ENCODE measurements at regions of chr11 and their contacts with region 1.

Region 1: GRCh38 chr11:62905927-62906531 is 15.1 kb downstream of the CHRM1 start:
- DNase-seq: peak; percentile 85
- H3K4me3 ChIP-seq: peak overlapping the region in 1 of 2 experiments; percentile 42; a peak in 2 of 4 replicates
- H3K27ac ChIP-seq: no peak overlapping the region
- H3K4me1 ChIP-seq: peaks cover 0 to 24% of the 10 kb centered on the region in 2 experiments; a peak in 1 of 4 replicates
- H3K27me3 ChIP-seq: no peaks in the 10 kb centered on the region
- CTCF ChIP-seq: peak; percentile 98
- EP300 ChIP-seq: no peak
- RAD21 ChIP-seq: peak; percentile 99

Region 2: DNA sequence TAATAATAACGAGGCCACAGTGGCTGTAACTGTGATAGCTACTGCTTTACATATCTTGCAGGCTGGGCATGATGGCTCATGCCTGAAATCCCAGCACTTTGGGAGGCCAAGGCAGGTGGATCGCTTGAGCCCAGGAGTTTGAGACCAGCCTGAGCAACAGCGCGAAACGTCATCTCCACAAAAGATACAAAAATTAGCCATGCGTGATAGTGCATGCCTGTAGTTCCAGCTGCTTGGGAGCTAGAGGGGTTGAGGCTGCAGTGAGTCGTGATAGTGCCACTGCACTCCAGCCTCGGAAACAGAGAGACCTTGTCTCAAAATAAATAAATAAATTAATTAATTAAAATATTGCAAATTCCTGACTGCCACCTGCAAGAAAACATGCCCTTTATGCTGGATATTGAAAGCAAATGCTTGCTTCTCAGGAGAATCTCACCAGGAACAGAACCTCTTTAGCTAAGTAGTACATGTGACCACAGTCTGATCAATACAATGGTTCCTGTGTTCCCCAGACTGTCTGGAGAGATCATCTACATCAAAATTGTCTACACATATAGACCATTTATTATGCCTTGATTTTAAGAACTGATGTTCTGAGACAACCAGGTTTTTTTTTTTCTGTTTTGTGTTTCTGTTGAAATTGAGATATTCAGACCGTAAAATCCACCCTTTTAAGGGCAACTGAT is 158.4 kb before region 1 on chr11:
- CTCF ChIA-PET with region 1: no interaction called
- POLR2A ChIA-PET with region 1: no interaction called
- DNase-seq: no peak
- H3K4me3 ChIP-seq: no peak overlapping the region
- H3K27ac ChIP-seq: peak overlapping the region in 1 of 2 experiments; percentile 20; a peak in 1 of 4 replicates
- H3K4me1 ChIP-seq: peaks cover 0 to 3% of the 10 kb centered on the region in 2 experiments; a peak in 1 of 4 replicates
- H3K27me3 ChIP-seq: no peaks in the 10 kb centered on the region
- CTCF ChIP-seq: no peak
- EP300 ChIP-seq: no peak
- RAD21 ChIP-seq: no peak

Region 3: GRCh38 chr11:62855571-62856332 is 50.3 kb before region 1 on chr11:
- CTCF ChIA-PET with region 1: no interaction called
- POLR2A ChIA-PET with region 1: no interaction called
- DNase-seq: peak; percentile 93
- H3K4me3 ChIP-seq: peak overlapping the region; percentile 90 to 94
- H3K27ac ChIP-seq: peak overlapping the region; percentile 61 to 93
- H3K4me1 ChIP-seq: peaks cover 14 to 16% of the 10 kb centered on the region in 2 experiments; a peak in 3 of 4 replicates
- H3K27me3 ChIP-seq: no peaks in the 10 kb centered on the region
- CTCF ChIP-seq: no peak
- EP300 ChIP-seq: no peak
- RAD21 ChIP-seq: no peak

Region 4: GRCh38 chr11:62889484-62890437 is 16.3 kb before region 1 on chr11:
- CTCF ChIA-PET with region 1: interaction called, 76 read pairs
- POLR2A ChIA-PET with region 1: no interaction called
- DNase-seq: no peak
- H3K4me3 ChIP-seq: no peak overlapping the region
- H3K27ac ChIP-seq: peak overlapping the region in 1 of 2 experiments; percentile 4; a peak in 1 of 4 replicates
- H3K4me1 ChIP-seq: peaks cover 0 to 10% of the 10 kb centered on the region in 2 experiments; a peak in 2 of 4 replicates
- H3K27me3 ChIP-seq: no peaks in the 10 kb centered on the region
- CTCF ChIP-seq: no peak
- EP300 ChIP-seq: no peak
- RAD21 ChIP-seq: no peak

Region 5: GRCh38 chr11:62974848-62975522 is 69.0 kb after region 1 on chr11:
- CTCF ChIA-PET with region 1: interaction called, 62 read pairs
- POLR2A ChIA-PET with region 1: interaction called, 4 read pairs
- DNase-seq: peak; percentile 80
- H3K4me3 ChIP-seq: no peak overlapping the region
- H3K27ac ChIP-seq: no peak overlapping the region
- H3K4me1 ChIP-seq: peaks cover 0 to 10% of the 10 kb centered on the region in 2 experiments; a peak in 1 of 4 replicates
- H3K27me3 ChIP-seq: no peaks in the 10 kb centered on the region
- CTCF ChIP-seq: peak; percentile 31; the same call in 1 of the 2 replicates
- EP300 ChIP-seq: no peak
- RAD21 ChIP-seq: peak; percentile 58

Region 6: GRCh38 chr11:62999649-63000048 is 93.6 kb after region 1 on chr11:
- CTCF ChIA-PET with region 1: interaction called, 27 read pairs
- POLR2A ChIA-PET with region 1: no interaction called
- DNase-seq: no peak
- H3K4me3 ChIP-seq: no peak overlapping the region
- H3K27ac ChIP-seq: no peak overlapping the region
- H3K4me1 ChIP-seq: no peaks in the 10 kb centered on the region
- H3K27me3 ChIP-seq: no peaks in the 10 kb centered on the region; the same call in 1 of the 2 replicates
- CTCF ChIP-seq: no peak
- EP300 ChIP-seq: no peak
- RAD21 ChIP-seq: no peak

Region 7: GRCh38 chr11:63015521-63016215 is 109.6 kb after region 1 on chr11 and contains the start of gene SLC22A8:
- CTCF ChIA-PET with region 1: interaction called, 751 read pairs
- POLR2A ChIA-PET with region 1: interaction called, 3 read pairs
- DNase-seq: no peak
- H3K4me3 ChIP-seq: no peak within 1 kb of the TSS
- H3K27ac ChIP-seq: no peak within 1 kb of the TSS
- H3K4me1 ChIP-seq: peaks cover 6 to 15% of the 10 kb centered on the region in 2 experiments; a peak in 2 of 4 replicates
- H3K27me3 ChIP-seq: no peaks in the 10 kb centered on the region; the same call in none of the 2 replicates
- CTCF ChIP-seq: no peak
- EP300 ChIP-seq: no peak
- RAD21 ChIP-seq: no peak
- polyA plus RNA-seq, gene SLC22A8: not detected in 2 replicates

Region 8: GRCh38 chr11:63032457-63032856 is 126.4 kb after region 1 on chr11:
- CTCF ChIA-PET with region 1: interaction called, 251 read pairs
- POLR2A ChIA-PET with region 1: no interaction called
- DNase-seq: no peak
- H3K4me3 ChIP-seq: no peak overlapping the region
- H3K27ac ChIP-seq: no peak overlapping the region
- H3K4me1 ChIP-seq: no peaks in the 10 kb centered on the region
- H3K27me3 ChIP-seq: peaks cover 19% of the 10 kb centered on the region
- CTCF ChIP-seq: no peak
- EP300 ChIP-seq: no peak
- RAD21 ChIP-seq: no peak

Region 9: GRCh38 chr11:63212742-63213141 is 306.7 kb after region 1 on chr11:
- CTCF ChIA-PET with region 1: interaction called, 16 read pairs
- POLR2A ChIA-PET with region 1: no interaction called
- DNase-seq: peak; percentile 23
- H3K4me3 ChIP-seq: no peak overlapping the region
- H3K27ac ChIP-seq: no peak overlapping the region
- H3K4me1 ChIP-seq: no peaks in the 10 kb centered on the region
- H3K27me3 ChIP-seq: peaks cover 6% of the 10 kb centered on the region; the same call in 1 of the 2 replicates
- CTCF ChIP-seq: peak; percentile 76
- EP300 ChIP-seq: no peak
- RAD21 ChIP-seq: peak; percentile 71